CD8-positive, alpha-beta T cell (primary cell): ENCODE measurements at regions of chr1 and their contacts with region 1.

Region 1: DNA sequence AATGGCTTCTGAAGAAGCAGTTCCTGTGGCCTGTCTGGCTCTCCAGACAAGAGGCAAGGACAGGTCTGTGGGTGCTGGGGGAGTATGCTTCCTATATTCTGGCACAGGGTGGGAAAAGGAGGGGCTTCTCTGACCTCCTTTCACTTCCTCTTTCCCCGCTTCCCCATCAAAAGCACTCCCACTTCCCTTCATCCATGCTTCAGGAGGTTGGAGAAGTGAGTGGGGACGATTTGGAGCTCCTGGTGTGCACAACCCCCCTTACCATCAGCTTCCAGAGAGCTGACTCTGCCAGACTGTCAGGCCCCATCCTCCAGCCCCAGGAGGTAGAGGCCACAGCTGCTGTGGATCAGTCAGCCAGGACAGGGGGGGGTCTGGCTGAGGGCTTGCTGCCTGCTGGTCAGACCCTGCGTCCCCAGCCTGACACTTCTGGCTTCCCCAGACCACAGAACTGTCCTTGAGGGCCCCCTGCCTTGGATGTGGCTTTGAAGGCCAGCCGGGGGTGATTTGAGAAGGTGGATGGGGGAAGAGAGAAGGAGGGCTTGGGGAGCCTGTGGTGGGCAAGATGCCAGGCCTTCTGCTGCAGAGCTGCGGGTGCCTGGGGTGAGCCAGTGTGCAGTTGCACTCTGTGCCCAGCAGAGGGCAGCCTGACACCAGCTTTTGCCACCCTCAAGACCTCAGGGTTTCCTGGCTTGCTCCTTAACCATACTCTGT is 21.5 kb upstream of the TMEM222 start:
- DNase-seq: peak; percentile 60 to 90 (median 74)
- ATAC-seq: peak; percentile 99
- H3K4me3 ChIP-seq: no peak overlapping the region
- H3K4me3 Mint-ChIP-seq: no peak overlapping the region
- H3K27ac ChIP-seq: no peak overlapping the region
- H3K27ac Mint-ChIP-seq: no peak overlapping the region
- H3K4me1 ChIP-seq: no peaks in the 10 kb centered on the region
- H3K4me1 Mint-ChIP-seq: peaks cover 6% of the 10 kb centered on the region
- H3K27me3 ChIP-seq: no peaks in the 10 kb centered on the region
- H3K27me3 Mint-ChIP-seq: no peaks in the 10 kb centered on the region
- CTCF ChIP-seq: peak; percentile 84

Region 2: DNA sequence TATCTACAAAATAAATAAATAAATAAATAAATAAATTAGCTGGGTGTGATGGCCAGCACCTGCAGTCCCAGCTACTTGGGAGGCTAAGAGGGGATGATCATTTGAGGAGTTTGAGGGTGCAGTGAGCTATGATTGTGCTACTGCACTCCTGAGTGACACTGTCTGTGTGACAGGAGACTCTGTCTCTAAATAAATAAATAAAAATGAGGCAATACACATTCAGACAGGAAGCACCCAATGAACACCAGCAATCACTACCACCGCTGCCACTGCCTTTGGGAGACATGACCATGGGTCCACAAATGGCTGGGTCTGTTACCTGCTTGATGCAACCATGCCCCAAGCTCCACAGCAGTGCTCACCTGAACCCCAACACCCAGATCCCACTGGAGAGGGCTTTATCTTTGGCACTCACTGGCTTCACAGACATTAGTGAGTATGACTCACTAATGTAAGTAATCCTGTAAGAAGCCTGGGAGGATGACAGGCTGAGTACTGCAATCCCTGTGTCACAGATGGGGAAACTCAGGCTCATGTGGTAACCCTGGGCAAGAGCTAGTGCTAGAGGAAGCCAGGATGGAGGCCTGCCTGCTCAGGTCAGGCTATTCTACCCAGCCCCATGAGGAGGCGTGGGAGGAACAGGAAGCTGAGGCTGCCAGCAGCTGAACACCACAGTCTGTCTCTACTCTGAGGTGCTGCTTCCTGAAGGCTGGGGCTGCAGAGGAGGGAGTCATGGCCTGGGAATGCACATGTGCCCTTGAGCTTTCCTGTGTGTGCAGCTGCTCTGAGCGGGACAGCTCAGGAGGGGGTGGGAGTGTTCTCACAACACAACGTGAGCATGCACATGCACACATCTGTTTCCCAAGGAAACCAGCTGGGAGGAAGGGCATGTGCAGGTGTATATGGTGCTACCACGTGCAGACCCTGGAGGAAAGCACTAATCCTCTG is 188.6 kb before region 1 on chr1:
- CTCF ChIA-PET with region 1: interaction called, 27 read pairs
- POLR2A ChIA-PET with region 1: no interaction called
- intact Hi-C with region 1: no loop called
- DNase-seq: peak; percentile 41 to 87 (median 72)
- ATAC-seq: peak; percentile 96
- H3K4me3 ChIP-seq: no peak overlapping the region
- H3K4me3 Mint-ChIP-seq: peak overlapping the region; percentile 69
- H3K27ac ChIP-seq: peak overlapping the region; percentile 1 to 78
- H3K27ac Mint-ChIP-seq: peak overlapping the region; percentile 92
- H3K4me1 ChIP-seq: peaks cover 45% of the 10 kb centered on the region
- H3K4me1 Mint-ChIP-seq: peaks cover 64% of the 10 kb centered on the region
- H3K27me3 ChIP-seq: no peaks in the 10 kb centered on the region
- H3K27me3 Mint-ChIP-seq: no peaks in the 10 kb centered on the region
- CTCF ChIP-seq: peak; percentile 49

Region 3: GRCh38 chr1:27314169-27314568 is 13.7 kb after region 1 on chr1:
- CTCF ChIA-PET with region 1: interaction called, 38 read pairs
- POLR2A ChIA-PET with region 1: no interaction called
- intact Hi-C with region 1: no loop called
- DNase-seq: no peak
- ATAC-seq: no peak
- H3K4me3 ChIP-seq: no peak overlapping the region
- H3K4me3 Mint-ChIP-seq: no peak overlapping the region
- H3K27ac ChIP-seq: no peak overlapping the region
- H3K27ac Mint-ChIP-seq: no peak overlapping the region
- H3K4me1 ChIP-seq: no peaks in the 10 kb centered on the region
- H3K4me1 Mint-ChIP-seq: no peaks in the 10 kb centered on the region
- H3K27me3 ChIP-seq: no peaks in the 10 kb centered on the region
- H3K27me3 Mint-ChIP-seq: no peaks in the 10 kb centered on the region
- CTCF ChIP-seq: no peak

Region 4: DNA sequence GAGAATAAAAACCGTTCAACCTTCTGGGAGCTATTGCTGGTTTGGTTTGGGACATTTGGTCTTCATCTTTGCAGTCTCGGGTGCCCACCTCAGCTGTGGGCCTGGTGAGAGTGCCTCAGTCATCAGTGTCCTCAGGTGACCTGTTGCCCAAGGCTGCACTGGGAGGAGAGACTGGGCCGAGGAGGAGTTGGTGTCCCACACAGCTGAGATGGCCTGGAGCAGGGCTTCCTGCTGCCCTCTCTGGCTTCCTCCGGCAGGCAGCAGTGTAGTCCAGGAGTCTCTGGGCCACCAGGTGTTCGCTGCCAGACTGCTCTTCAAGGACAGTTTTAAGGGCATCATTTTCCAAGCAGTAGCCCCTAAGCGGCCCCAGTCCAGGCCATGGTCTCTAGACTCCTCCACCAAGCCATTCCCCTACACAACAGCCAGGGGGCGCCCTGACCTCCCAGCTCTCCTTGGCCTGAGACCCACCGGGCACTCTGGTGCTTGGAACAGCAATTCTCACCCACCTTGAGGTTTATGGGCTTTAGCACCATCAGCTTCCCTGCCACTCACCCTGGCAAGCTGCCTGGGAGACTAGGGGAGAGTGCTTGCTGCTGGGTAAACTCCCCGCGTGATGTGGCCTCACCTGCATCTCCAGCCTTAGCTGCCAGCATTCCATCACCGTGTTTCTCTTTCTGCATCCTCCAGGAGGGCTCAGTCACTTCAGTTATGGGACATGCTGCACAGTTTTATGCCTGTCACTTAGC is 32.2 kb after region 1 on chr1:
- CTCF ChIA-PET with region 1: interaction called, 96 read pairs
- POLR2A ChIA-PET with region 1: interaction called, 3 read pairs
- intact Hi-C with region 1: loop called in 1 of 2 experiments (anchors 1 kb)
- DNase-seq: peak; percentile 37 to 78 (median 64)
- ATAC-seq: peak; percentile 96
- H3K4me3 ChIP-seq: no peak overlapping the region
- H3K4me3 Mint-ChIP-seq: no peak overlapping the region
- H3K27ac ChIP-seq: no peak overlapping the region
- H3K27ac Mint-ChIP-seq: peak overlapping the region; percentile 27
- H3K4me1 ChIP-seq: peaks cover 13% of the 10 kb centered on the region
- H3K4me1 Mint-ChIP-seq: peaks cover 38% of the 10 kb centered on the region
- H3K27me3 ChIP-seq: no peaks in the 10 kb centered on the region
- H3K27me3 Mint-ChIP-seq: no peaks in the 10 kb centered on the region
- CTCF ChIP-seq: peak; percentile 86

Region 5: GRCh38 chr1:27357281-27358037 is 57.0 kb after region 1 on chr1:
- CTCF ChIA-PET with region 1: interaction called, 39 read pairs
- POLR2A ChIA-PET with region 1: interaction called, 3 read pairs
- intact Hi-C with region 1: no loop called
- DNase-seq: peak; percentile 64 to 93 (median 81)
- ATAC-seq: peak; percentile 78
- H3K4me3 ChIP-seq: peak overlapping the region; percentile 57 to 78
- H3K4me3 Mint-ChIP-seq: peak overlapping the region; percentile 86
- H3K27ac ChIP-seq: peak overlapping the region; percentile 38 to 59
- H3K27ac Mint-ChIP-seq: peak overlapping the region; percentile 89
- H3K4me1 ChIP-seq: peaks cover 46% of the 10 kb centered on the region
- H3K4me1 Mint-ChIP-seq: peaks cover 55% of the 10 kb centered on the region
- H3K27me3 ChIP-seq: no peaks in the 10 kb centered on the region
- H3K27me3 Mint-ChIP-seq: no peaks in the 10 kb centered on the region
- CTCF ChIP-seq: peak; percentile 91

Region 6: GRCh38 chr1:27536767-27537166 is 236.3 kb after region 1 on chr1:
- CTCF ChIA-PET with region 1: no interaction called
- POLR2A ChIA-PET with region 1: no interaction called
- intact Hi-C with region 1: no loop called
- DNase-seq: no peak
- ATAC-seq: no peak
- H3K4me3 ChIP-seq: no peak overlapping the region
- H3K4me3 Mint-ChIP-seq: no peak overlapping the region
- H3K27ac ChIP-seq: no peak overlapping the region
- H3K27ac Mint-ChIP-seq: no peak overlapping the region
- H3K4me1 ChIP-seq: peaks cover 7% of the 10 kb centered on the region
- H3K4me1 Mint-ChIP-seq: peaks cover 11% of the 10 kb centered on the region
- H3K27me3 ChIP-seq: no peaks in the 10 kb centered on the region
- H3K27me3 Mint-ChIP-seq: no peaks in the 10 kb centered on the region
- CTCF ChIP-seq: no peak